Heart left ventricle (tissue), 16 donors: ENCODE measurements at regions of chr20 and their contacts with region 1.

Region 1: GRCh38 chr20:62616728-62617621 is 25.3 kb upstream of the SLCO4A1 start:
- DNase-seq: peak; percentile 59 to 92 (median 82)
- ATAC-seq: peak; percentile 63 to 90 (median 78)
- H3K4me3 ChIP-seq: no peak overlapping the region
- H3K27ac ChIP-seq: peak overlapping the region; percentile 44 to 96 (median 76)
- H3K4me1 ChIP-seq: peaks cover 0 to 40% (median 25%) of the 10 kb centered on the region in 12 donors
- H3K27me3 ChIP-seq: no peaks in the 10 kb centered on the region
- CTCF ChIP-seq: peak; percentile 89 to 97 (median 94)
- POLR2A ChIP-seq: no peak

Region 2: GRCh38 chr20:62427172-62428001 is 189.6 kb before region 1 on chr20 and contains the start of gene RBBP8NL:
- intact Hi-C with region 1: loop called in 1 of 10 experiments (anchors 10 kb)
- DNase-seq: no peak
- ATAC-seq: no peak
- H3K4me3 ChIP-seq: no peak within 1 kb of the TSS
- H3K27ac ChIP-seq: no peak within 1 kb of the TSS
- H3K4me1 ChIP-seq: peaks cover 0 to 2% (median 0%) of the 10 kb centered on the region in 12 donors
- H3K27me3 ChIP-seq: peaks cover 0 to 24% (median 7%) of the 10 kb centered on the region in 9 donors
- CTCF ChIP-seq: no peak
- POLR2A ChIP-seq: no peak
- total RNA-seq, gene RBBP8NL: not detected

Region 3: GRCh38 chr20:62685781-62686555 is 69.0 kb after region 1 on chr20:
- intact Hi-C with region 1: no loop called
- DNase-seq: no peak
- ATAC-seq: peak in 3 of 4 donors; percentile 40 to 71 (median 47)
- H3K4me3 ChIP-seq: peak overlapping the region in 1 of 12 donors; percentile 17
- H3K27ac ChIP-seq: no peak overlapping the region
- H3K4me1 ChIP-seq: peaks cover 0 to 12% (median 0%) of the 10 kb centered on the region in 12 donors
- H3K27me3 ChIP-seq: peaks cover 0 to 55% (median 10%) of the 10 kb centered on the region in 9 donors
- CTCF ChIP-seq: no peak
- POLR2A ChIP-seq: no peak